ENCODE measurements at regions of chr11 and their contacts with region 1.

Region 1: DNA sequence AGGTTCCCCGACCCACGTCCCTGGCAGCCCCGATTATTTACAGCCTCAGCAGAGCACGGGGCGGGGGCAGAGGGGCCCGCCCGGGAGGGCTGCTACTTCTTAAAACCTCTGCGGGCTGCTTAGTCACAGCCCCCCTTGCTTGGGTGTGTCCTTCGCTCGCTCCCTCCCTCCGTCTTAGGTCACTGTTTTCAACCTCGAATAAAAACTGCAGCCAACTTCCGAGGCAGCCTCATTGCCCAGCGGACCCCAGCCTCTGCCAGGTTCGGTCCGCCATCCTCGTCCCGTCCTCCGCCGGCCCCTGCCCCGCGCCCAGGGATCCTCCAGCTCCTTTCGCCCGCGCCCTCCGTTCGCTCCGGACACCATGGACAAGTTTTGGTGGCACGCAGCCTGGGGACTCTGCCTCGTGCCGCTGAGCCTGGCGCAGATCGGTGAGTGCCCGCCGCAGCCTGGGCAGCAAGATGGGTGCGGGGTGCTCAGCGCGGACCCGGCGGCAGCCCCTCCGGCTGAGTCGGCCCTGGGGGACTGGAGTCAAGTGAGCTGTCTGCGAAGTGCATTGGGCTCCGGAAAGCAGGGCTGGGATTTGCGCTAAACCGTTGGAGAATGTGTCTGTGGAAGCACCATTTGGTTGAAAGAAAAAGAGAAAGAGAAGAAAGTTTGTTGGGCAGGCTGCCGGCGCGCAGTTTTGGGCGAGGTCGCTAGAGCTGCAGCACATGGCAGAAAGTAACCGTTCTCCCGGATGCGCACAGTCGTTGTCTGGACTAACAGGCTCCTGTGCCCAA is at the start of gene CD44:
- DNase-seq: peak; percentile 73
- ATAC-seq: peak; percentile 70
- H3K4me3 ChIP-seq: peak within 1 kb of the TSS; percentile 87 to 97
- H3K27ac ChIP-seq: peak within 1 kb of the TSS; percentile 97
- H3K4me1 ChIP-seq: peaks cover 50 to 70% of the 10 kb centered on the region in 2 experiments
- H3K27me3 ChIP-seq: no peaks in the 10 kb centered on the region
- CTCF ChIP-seq: no peak
- POLR2A ChIP-seq: peak; percentile 30
- RAD21 ChIP-seq: no peak
- total RNA-seq, gene CD44: 742 TPM

Region 2: GRCh38 chr11:35009191-35009940 is 129.8 kb before region 1 on chr11:
- CTCF ChIA-PET with region 1: interaction called, 3 read pairs
- POLR2A ChIA-PET with region 1: interaction called, 23 read pairs
- RAD21 ChIA-PET with region 1: interaction called in 1 of 2 experiments, 3 read pairs
- intact Hi-C with region 1: loop called (anchors 1 kb)
- DNase-seq: peak; percentile 96
- ATAC-seq: peak; percentile 78
- H3K4me3 ChIP-seq: peak overlapping the region in 1 of 2 experiments; percentile 21; a peak in 2 of 4 replicates
- H3K27ac ChIP-seq: peak overlapping the region; percentile 99
- H3K4me1 ChIP-seq: peaks cover 90 to 92% of the 10 kb centered on the region in 2 experiments
- H3K27me3 ChIP-seq: no peaks in the 10 kb centered on the region
- CTCF ChIP-seq: peak in 1 of 3 experiments; percentile 9; a peak in 1 of 6 replicates
- POLR2A ChIP-seq: no peak
- RAD21 ChIP-seq: peak; percentile 56

Region 3: GRCh38 chr11:35030716-35031213 is 108.4 kb before region 1 on chr11:
- CTCF ChIA-PET with region 1: no interaction called
- POLR2A ChIA-PET with region 1: interaction called, 18 read pairs
- RAD21 ChIA-PET with region 1: no interaction called
- intact Hi-C with region 1: no loop called
- DNase-seq: peak; percentile 87
- ATAC-seq: peak; percentile 95
- H3K4me3 ChIP-seq: peak overlapping the region; percentile 8 to 35
- H3K27ac ChIP-seq: peak overlapping the region; percentile 70
- H3K4me1 ChIP-seq: peaks cover 27 to 54% of the 10 kb centered on the region in 2 experiments
- H3K27me3 ChIP-seq: no peaks in the 10 kb centered on the region
- CTCF ChIP-seq: no peak
- POLR2A ChIP-seq: no peak
- RAD21 ChIP-seq: no peak; the same call in 1 of the 2 replicates

Region 4: GRCh38 chr11:35237860-35238715 is 99.0 kb after region 1 on chr11:
- CTCF ChIA-PET with region 1: no interaction called
- POLR2A ChIA-PET with region 1: no interaction called
- RAD21 ChIA-PET with region 1: no interaction called
- intact Hi-C with region 1: loop called (anchors 5 kb)
- DNase-seq: peak; percentile 80
- ATAC-seq: peak; percentile 75
- H3K4me3 ChIP-seq: 0 out of 4 replicates have a peak overlapping the region, but pooled peaks of 1 of the 2 experiments have one; percentile 2
- H3K27ac ChIP-seq: no peak overlapping the region
- H3K4me1 ChIP-seq: peaks cover 26 to 39% of the 10 kb centered on the region in 2 experiments
- H3K27me3 ChIP-seq: no peaks in the 10 kb centered on the region
- CTCF ChIP-seq: peak; percentile 61 to 96 (median 85); a peak in 5 of 6 replicates
- POLR2A ChIP-seq: no peak
- RAD21 ChIP-seq: peak; percentile 87

Measured in HCT116 (cell line).